ENCODE measurements at regions of chr15 and their contacts with region 1.

Region 1: GRCh38 chr15:55407949-55408791 is at the starts of genes CCPG1 and PIERCE2:
- DNase-seq: peak; percentile 92 to 96
- ATAC-seq: peak; percentile 97 to 98 (median 98)
- H3K4me3 ChIP-seq: peak within 1 kb of the TSS; percentile 94
- H3K27ac ChIP-seq: peak within 1 kb of the TSS; percentile 98
- H3K4me1 ChIP-seq: peaks cover 27% of the 10 kb centered on the region
- H3K27me3 ChIP-seq: no peaks in the 10 kb centered on the region
- CTCF ChIP-seq: peak; percentile 90
- total RNA-seq, gene CCPG1: 63.5 to 112 (median 82.8) TPM
- total RNA-seq, gene PIERCE2: 2.5 to 10.7 (median 4.6) TPM

Region 2: GRCh38 chr15:55196458-55197361 is 211.5 kb before region 1 on chr15 and contains the start of gene RSL24D1:
- intact Hi-C with region 1: loop called (anchors 10 kb)
- DNase-seq: peak; percentile 96 to 98
- ATAC-seq: peak; percentile 99 to 100 (median 100)
- H3K4me3 ChIP-seq: peak within 1 kb of the TSS; percentile 76
- H3K27ac ChIP-seq: peak within 1 kb of the TSS; percentile 93
- H3K4me1 ChIP-seq: peaks cover 17% of the 10 kb centered on the region
- H3K27me3 ChIP-seq: no peaks in the 10 kb centered on the region
- CTCF ChIP-seq: peak; percentile 37
- total RNA-seq, gene RSL24D1: 37.9 to 61.0 (median 55.3) TPM

Region 3: DNA sequence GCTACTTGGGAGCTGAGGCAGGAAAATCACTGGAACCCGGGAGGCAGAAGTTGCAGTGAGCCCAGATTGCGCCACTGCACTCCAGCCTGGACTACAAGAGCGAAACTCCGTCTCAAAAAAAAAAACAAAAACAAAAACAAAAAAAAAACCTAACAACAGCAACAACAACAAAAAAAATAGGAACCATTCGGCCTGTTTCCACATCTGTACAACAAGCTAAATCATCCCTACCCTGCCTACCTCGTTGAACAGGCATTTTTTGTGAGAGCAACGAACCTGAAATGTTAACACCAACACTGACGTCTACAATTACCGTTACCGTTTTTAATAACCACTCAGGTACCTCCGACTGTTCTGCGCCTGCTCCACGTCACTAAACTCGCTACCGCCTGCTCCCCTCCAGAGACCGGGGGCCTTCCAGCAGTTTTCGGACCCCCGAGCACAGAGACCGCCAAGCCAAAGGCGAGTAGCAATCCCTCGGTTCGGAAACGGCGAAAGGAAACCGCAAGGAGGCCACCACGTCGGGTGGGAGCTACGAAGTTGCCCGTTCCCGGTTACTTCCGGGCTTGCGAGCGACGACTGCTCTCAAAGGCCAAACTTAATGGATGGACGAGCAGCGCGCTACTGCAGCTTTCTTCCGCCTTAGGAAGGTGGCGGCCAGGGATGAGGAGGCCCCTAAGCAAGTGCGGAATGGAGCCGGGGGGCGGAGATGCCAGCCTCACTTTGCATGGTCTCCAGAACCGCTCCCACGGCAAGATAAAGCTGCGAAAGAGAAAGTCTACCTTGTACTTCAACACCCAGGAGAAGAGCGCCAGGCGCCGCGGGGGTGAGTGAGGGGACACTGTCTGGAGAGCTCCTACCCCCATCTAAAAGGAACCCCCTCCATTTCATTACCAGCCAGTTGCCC is 89.3 kb before region 1 on chr15 and contains the starts of genes PIGB and PIGBOS1:
- intact Hi-C with region 1: loop called in 1 of 2 experiments (anchors 5 kb)
- DNase-seq: peak; percentile 80 to 90
- ATAC-seq: peak; percentile 89 to 98 (median 95)
- H3K4me3 ChIP-seq: peak within 1 kb of the TSS; percentile 91
- H3K27ac ChIP-seq: peak within 1 kb of the TSS; percentile 87
- H3K4me1 ChIP-seq: peaks cover 8% of the 10 kb centered on the region
- H3K27me3 ChIP-seq: no peaks in the 10 kb centered on the region
- CTCF ChIP-seq: peak; percentile 12
- total RNA-seq, gene PIGB: 1.0 to 1.8 (median 1.2) TPM
- total RNA-seq, gene PIGBOS1: 3.5 to 7.6 (median 6.1) TPM

Region 4: DNA sequence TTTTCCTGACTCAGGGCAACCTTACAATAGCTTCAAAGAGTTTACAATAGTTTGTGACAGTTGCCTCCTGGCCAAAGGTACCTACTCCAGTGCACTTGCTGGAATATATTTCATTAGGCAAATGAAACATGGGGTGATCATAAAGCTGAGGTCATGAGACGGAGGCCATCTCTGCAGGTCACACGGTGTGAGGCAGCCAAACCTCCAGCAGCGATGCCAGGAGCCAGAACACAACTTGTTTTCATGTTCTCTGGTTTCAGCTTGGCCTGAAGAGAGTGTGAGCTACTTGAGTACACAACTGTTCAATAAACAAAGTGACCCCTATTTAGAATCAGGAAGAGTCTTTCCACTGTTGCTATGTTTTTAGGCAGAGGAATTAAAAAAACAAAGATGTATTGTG is 222.7 kb after region 1 on chr15:
- intact Hi-C with region 1: no loop called
- DNase-seq: peak; percentile 29 to 86
- ATAC-seq: peak; percentile 86 to 93 (median 88)
- H3K4me3 ChIP-seq: peak overlapping the region; percentile 26
- H3K27ac ChIP-seq: peak overlapping the region; percentile 89
- H3K4me1 ChIP-seq: peaks cover 27% of the 10 kb centered on the region
- H3K27me3 ChIP-seq: no peaks in the 10 kb centered on the region
- CTCF ChIP-seq: no peak

Measured in psoas muscle (tissue), 8 donors.